HepG2 (cell line): ENCODE measurements at regions of chr13 and their contacts with region 1.

Region 1: GRCh38 chr13:56187331-56187730 is 953.4 kb upstream of the PRR20A start:
- DNase-seq: no peak
- ATAC-seq: no peak
- H3K4me3 ChIP-seq: no peak overlapping the region
- H3K27ac ChIP-seq: no peak overlapping the region
- H3K4me1 ChIP-seq: no peaks in the 10 kb centered on the region
- H3K27me3 ChIP-seq: no peaks in the 10 kb centered on the region
- CTCF ChIP-seq: no peak
- EP300 ChIP-seq: no peak
- POLR2A ChIP-seq: no peak
- RAD21 ChIP-seq: no peak

Region 2: GRCh38 chr13:56299650-56300049 is 112.3 kb after region 1 on chr13:
- CTCF ChIA-PET with region 1: no interaction called
- POLR2A ChIA-PET with region 1: no interaction called
- in situ Hi-C with region 1: loop called (anchors 25 kb)
- intact Hi-C with region 1: no loop called
- DNase-seq: no peak
- ATAC-seq: no peak
- H3K4me3 ChIP-seq: no peak overlapping the region
- H3K27ac ChIP-seq: no peak overlapping the region
- H3K4me1 ChIP-seq: no peaks in the 10 kb centered on the region
- H3K27me3 ChIP-seq: no peaks in the 10 kb centered on the region
- CTCF ChIP-seq: no peak
- EP300 ChIP-seq: no peak
- POLR2A ChIP-seq: no peak
- RAD21 ChIP-seq: no peak